ENCODE measurements at regions of chr4 and their contacts with region 1.

Region 1: DNA sequence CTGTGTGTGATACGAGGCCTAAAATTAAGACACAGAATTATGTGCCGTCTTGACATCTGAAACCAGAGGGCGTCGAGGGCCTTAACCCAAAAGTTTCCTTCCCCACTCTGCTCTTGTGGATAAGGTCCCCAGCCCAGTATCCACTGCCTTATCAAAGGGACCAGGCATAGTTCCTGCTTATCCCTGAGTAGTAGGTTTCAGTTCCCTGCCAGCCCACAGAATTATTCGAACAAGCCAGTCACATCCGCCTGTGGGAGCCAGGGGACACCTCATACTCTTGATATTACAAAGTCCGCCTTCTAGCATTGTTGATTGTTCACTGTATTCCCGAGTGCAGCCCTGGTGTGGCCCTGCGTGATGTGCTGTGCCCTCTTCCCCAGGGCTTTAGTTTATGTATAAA is 5.4 kb upstream of the MMRN1 start:
- DNase-seq: peak; percentile 97 to 99 (median 97)
- H3K4me3 ChIP-seq: peak overlapping the region in 3 of 7 experiments; percentile 17 to 59 (median 30)
- H3K27ac ChIP-seq: peak overlapping the region; percentile 71 to 72
- H3K4me1 ChIP-seq: peaks cover 3 to 54% (median 19%) of the 10 kb centered on the region in 4 experiments
- H3K27me3 ChIP-seq: no peaks in the 10 kb centered on the region

Region 2: DNA sequence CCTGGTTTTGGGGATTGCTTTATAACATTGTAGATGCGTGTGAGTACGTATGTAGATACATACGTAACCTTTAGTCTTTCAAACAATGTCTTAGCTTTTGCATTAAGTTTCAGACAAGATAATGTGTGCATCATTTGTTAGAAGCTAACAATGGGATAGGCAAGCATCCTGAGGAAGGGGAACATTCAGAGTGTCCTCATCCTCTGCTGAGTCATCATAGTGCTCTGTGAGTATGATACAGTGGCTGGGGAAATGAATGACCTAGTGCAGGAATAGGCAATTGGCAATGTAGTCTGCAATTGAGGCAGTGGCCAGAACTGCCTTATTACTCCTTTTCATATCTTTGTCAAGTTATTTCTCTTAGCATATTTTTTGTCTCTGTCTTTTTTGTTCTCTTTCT is 1198.9 kb before region 1 on chr4:
- CTCF ChIA-PET with region 1: no interaction called
- POLR2A ChIA-PET with region 1: interaction called, 10 read pairs
- DNase-seq: peak in 2 of 3 donors; percentile 28 to 44
- H3K4me3 ChIP-seq: no peak overlapping the region
- H3K27ac ChIP-seq: no peak overlapping the region
- H3K4me1 ChIP-seq: peaks cover 0 to 8% (median 0%) of the 10 kb centered on the region in 4 experiments
- H3K27me3 ChIP-seq: no peaks in the 10 kb centered on the region

Measured in common myeloid progenitor, CD34-positive (primary cell).